ENCODE measurements at regions of chr3 and their contacts with region 1.

Region 1: GRCh38 chr3:143158014-143158988 is 38.7 kb downstream of the CHST2 start:
- DNase-seq: peak in 2 of 14 experiments; percentile 21 to 36
- ATAC-seq: no peak
- H3K4me3 ChIP-seq: no peak overlapping the region
- H3K4me3 Mint-ChIP-seq: no peak overlapping the region
- H3K27ac ChIP-seq: no peak overlapping the region
- H3K27ac Mint-ChIP-seq: no peak overlapping the region
- H3K4me1 ChIP-seq: no peaks in the 10 kb centered on the region
- H3K4me1 Mint-ChIP-seq: peaks cover 31% of the 10 kb centered on the region
- H3K27me3 ChIP-seq: no peaks in the 10 kb centered on the region
- H3K27me3 Mint-ChIP-seq: no peaks in the 10 kb centered on the region
- CTCF ChIP-seq: no peak

Region 2: GRCh38 chr3:143171141-143171970 is 13.1 kb after region 1 on chr3:
- CTCF ChIA-PET with region 1: no interaction called
- POLR2A ChIA-PET with region 1: interaction called, 10 read pairs
- intact Hi-C with region 1: no loop called
- DNase-seq: peak in 4 of 14 experiments; percentile 38 to 64 (median 42)
- ATAC-seq: peak; percentile 63
- H3K4me3 ChIP-seq: no peak overlapping the region
- H3K4me3 Mint-ChIP-seq: peak overlapping the region; percentile 71
- H3K27ac ChIP-seq: peak overlapping the region; percentile 46 to 61
- H3K27ac Mint-ChIP-seq: peak overlapping the region; percentile 85
- H3K4me1 ChIP-seq: peaks cover 41% of the 10 kb centered on the region
- H3K4me1 Mint-ChIP-seq: peaks cover 80% of the 10 kb centered on the region
- H3K27me3 ChIP-seq: no peaks in the 10 kb centered on the region
- H3K27me3 Mint-ChIP-seq: no peaks in the 10 kb centered on the region
- CTCF ChIP-seq: no peak

Region 3: DNA sequence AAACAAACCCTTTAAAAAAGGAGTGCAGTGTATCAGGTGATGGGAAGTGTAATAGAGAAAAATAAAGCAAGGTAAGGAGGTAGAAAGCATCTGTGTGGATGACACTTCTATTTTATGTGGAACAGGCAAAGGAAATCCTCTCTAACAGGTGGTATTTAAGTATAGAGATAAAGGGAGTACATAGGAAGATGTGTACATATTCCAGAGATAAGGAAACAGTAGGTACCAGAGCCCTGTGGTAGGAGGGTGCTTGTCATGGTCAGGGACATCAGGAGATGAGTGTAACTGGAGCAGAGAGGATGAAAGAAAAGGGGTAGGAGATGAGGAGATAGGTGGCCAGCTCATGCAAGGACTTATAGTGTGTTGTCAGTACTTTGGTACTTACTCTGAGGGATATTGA is 27.1 kb after region 1 on chr3:
- CTCF ChIA-PET with region 1: no interaction called
- POLR2A ChIA-PET with region 1: no interaction called
- intact Hi-C with region 1: loop called in 1 of 2 experiments (anchors 1 kb)
- DNase-seq: no peak
- ATAC-seq: no peak
- H3K4me3 ChIP-seq: no peak overlapping the region
- H3K4me3 Mint-ChIP-seq: no peak overlapping the region
- H3K27ac ChIP-seq: no peak overlapping the region
- H3K27ac Mint-ChIP-seq: no peak overlapping the region
- H3K4me1 ChIP-seq: no peaks in the 10 kb centered on the region
- H3K4me1 Mint-ChIP-seq: peaks cover 29% of the 10 kb centered on the region
- H3K27me3 ChIP-seq: no peaks in the 10 kb centered on the region
- H3K27me3 Mint-ChIP-seq: no peaks in the 10 kb centered on the region
- CTCF ChIP-seq: no peak

Region 4: DNA sequence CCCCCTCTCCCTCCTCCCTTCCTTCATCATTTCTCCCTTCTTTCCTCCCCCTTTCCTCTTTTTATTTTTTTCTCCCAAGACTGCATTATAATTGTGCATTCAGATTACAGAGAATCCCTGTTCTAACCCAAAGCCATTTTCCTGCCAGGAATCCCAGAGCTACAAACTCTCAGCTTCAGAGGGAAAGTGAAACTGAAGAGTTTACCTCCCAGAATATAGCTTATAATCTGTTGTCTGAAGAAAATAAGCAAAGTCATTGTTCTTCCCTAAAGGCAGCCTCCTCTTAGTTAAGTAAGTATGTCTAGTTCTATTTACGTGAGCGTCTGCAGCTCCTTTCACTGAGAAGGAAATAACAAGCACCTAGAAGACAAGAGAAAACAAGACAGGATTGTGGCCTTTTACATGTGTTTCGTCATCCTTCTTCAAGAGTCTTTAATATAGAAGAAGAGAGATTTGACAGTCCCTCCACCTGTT is 58.4 kb after region 1 on chr3:
- CTCF ChIA-PET with region 1: no interaction called
- POLR2A ChIA-PET with region 1: no interaction called
- intact Hi-C with region 1: no loop called
- DNase-seq: peak in 1 of 14 experiments; percentile 11
- ATAC-seq: peak; percentile 91
- H3K4me3 ChIP-seq: no peak overlapping the region
- H3K4me3 Mint-ChIP-seq: peak overlapping the region; percentile 78
- H3K27ac ChIP-seq: no peak overlapping the region
- H3K27ac Mint-ChIP-seq: peak overlapping the region; percentile 73
- H3K4me1 ChIP-seq: no peaks in the 10 kb centered on the region
- H3K4me1 Mint-ChIP-seq: peaks cover 23% of the 10 kb centered on the region
- H3K27me3 ChIP-seq: no peaks in the 10 kb centered on the region
- H3K27me3 Mint-ChIP-seq: no peaks in the 10 kb centered on the region
- CTCF ChIP-seq: no peak